ENCODE measurements at regions of chr1 and their contacts with region 1.

Region 1: GRCh38 chr1:197915862-197916499 is 1.2 kb upstream of the LHX9 start:
- DNase-seq: peak in 3 of 14 experiments; percentile 11 to 33 (median 30)
- ATAC-seq: no peak
- H3K4me3 ChIP-seq: no peak overlapping the region
- H3K4me3 Mint-ChIP-seq: peak overlapping the region; percentile 35
- H3K27ac ChIP-seq: no peak overlapping the region
- H3K27ac Mint-ChIP-seq: no peak overlapping the region
- H3K4me1 ChIP-seq: peaks cover 85% of the 10 kb centered on the region
- H3K4me1 Mint-ChIP-seq: peaks cover 94% of the 10 kb centered on the region
- H3K27me3 ChIP-seq: peaks cover 99 to 100% of the 10 kb centered on the region in 2 experiments
- H3K27me3 Mint-ChIP-seq: peaks cover 100% of the 10 kb centered on the region
- CTCF ChIP-seq: no peak

Region 2: DNA sequence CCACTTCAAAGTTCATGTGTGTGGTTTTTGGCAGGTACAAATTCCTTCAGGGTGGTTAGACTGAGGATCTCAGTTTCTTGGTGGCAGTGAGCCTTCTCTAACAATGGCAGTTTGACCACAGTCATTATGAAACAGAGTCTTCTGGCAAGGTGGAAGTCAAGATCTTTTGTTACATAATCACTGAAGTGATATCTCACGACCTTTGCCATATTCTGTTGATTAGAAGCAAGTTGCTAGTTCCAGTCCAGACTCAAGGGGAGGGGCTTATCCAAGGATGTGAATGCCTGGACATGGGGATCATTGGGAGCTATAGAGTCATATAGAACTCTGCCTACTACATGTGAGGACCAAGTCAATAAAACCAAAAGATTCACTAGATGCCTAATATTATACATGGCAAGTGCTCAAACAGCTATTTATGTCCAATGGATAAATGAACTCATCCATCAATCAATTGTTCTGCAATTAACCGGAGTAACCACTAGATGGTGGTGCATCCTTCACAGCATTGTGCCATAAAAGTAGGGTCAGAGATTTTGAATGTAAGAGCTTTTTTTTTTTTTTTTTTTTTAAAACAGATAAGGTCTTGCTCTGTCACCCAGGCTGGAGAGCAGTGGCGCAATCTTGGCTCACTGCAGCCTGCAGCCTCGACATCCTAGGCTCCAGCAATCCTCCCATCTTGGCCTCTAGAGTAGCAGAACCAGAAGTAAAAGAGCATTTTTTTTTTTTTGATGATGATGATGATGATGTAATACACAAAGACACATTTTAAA is 516.0 kb before region 1 on chr1:
- CTCF ChIA-PET with region 1: no interaction called
- POLR2A ChIA-PET with region 1: no interaction called
- intact Hi-C with region 1: loop called (anchors 10 kb)
- DNase-seq: peak in 5 of 14 experiments; percentile 7 to 67 (median 48)
- ATAC-seq: peak; percentile 81
- H3K4me3 ChIP-seq: no peak overlapping the region
- H3K4me3 Mint-ChIP-seq: no peak overlapping the region
- H3K27ac ChIP-seq: no peak overlapping the region
- H3K27ac Mint-ChIP-seq: no peak overlapping the region
- H3K4me1 ChIP-seq: no peaks in the 10 kb centered on the region
- H3K4me1 Mint-ChIP-seq: no peaks in the 10 kb centered on the region
- H3K27me3 ChIP-seq: no peaks in the 10 kb centered on the region
- H3K27me3 Mint-ChIP-seq: peaks cover 15% of the 10 kb centered on the region
- CTCF ChIP-seq: peak; percentile 59

Region 3: DNA sequence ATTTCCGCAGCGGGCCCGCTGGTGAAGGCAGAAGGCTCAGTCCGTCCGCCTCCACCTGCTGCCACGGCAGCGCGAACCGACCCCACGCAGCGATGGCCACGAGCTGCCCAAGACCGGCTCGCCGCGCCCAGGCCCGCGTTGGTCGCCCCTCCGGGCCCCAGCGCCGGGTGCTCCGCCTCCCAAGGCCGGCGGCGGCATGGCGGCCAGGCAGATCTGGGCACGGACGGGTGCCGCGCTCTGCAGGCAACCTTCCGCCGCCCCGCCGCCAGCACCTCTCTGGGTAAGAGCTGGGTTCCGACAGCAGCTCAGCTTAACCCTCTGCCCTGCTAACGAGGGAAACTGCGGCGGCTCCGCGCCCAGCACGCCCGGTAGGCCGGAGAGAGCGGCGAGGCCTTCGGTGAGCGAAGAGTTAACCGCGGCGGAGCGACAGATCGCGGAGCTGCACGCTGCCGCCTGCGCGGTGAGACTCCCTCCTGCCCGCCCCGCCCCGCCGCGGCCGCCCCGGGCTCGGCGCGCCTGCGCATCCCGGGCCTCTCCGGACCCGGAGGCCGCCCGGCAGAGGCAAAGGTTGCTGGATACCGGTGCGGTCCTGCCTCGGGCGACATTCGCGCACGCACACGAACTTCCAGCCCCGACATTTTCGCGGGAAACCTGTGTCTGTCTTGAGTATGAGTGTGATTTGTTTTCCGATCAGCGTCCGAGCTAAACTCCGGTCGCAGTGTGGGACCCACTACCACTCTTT is 13.4 kb before region 1 on chr1 and contains the start of gene C1orf53:
- CTCF ChIA-PET with region 1: interaction called, 5 read pairs
- POLR2A ChIA-PET with region 1: interaction called, 39 read pairs
- intact Hi-C with region 1: loop called in 1 of 2 experiments (anchors 2 kb)
- DNase-seq: peak; percentile 40 to 87 (median 66)
- ATAC-seq: peak; percentile 89
- H3K4me3 ChIP-seq: peak within 1 kb of the TSS; percentile 59
- H3K4me3 Mint-ChIP-seq: peak within 1 kb of the TSS; percentile 97
- H3K27ac ChIP-seq: peak within 1 kb of the TSS in 1 of 2 donors; percentile 30
- H3K27ac Mint-ChIP-seq: peak within 1 kb of the TSS; percentile 79
- H3K4me1 ChIP-seq: peaks cover 11% of the 10 kb centered on the region
- H3K4me1 Mint-ChIP-seq: peaks cover 14% of the 10 kb centered on the region
- H3K27me3 ChIP-seq: peaks cover 18 to 48% of the 10 kb centered on the region in 2 experiments
- H3K27me3 Mint-ChIP-seq: peaks cover 54% of the 10 kb centered on the region
- CTCF ChIP-seq: no peak
- total RNA-seq, gene C1orf53: not detected

Region 4: DNA sequence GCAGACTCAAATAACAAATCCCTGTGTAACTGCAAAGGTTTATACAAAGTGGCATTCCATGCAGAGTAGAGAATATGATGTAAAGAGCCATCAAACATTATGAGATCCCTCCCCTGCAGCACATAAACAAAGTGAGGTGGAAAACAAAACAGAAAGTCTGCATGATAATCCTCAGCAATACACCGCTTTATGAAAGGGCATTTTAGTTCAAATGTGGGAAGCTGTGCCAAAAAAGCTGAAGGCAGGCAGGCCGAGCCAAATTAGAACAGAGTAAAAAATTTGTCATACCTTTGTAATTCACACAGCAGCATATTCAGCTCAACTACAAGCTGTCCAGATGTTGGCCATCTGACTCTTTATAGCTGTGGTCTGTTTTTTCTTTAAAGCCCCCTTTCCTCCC is 114.7 kb after region 1 on chr1:
- CTCF ChIA-PET with region 1: no interaction called
- POLR2A ChIA-PET with region 1: no interaction called
- intact Hi-C with region 1: no loop called
- DNase-seq: no peak
- ATAC-seq: no peak
- H3K4me3 ChIP-seq: no peak overlapping the region
- H3K4me3 Mint-ChIP-seq: no peak overlapping the region
- H3K27ac ChIP-seq: no peak overlapping the region
- H3K27ac Mint-ChIP-seq: no peak overlapping the region
- H3K4me1 ChIP-seq: no peaks in the 10 kb centered on the region
- H3K4me1 Mint-ChIP-seq: no peaks in the 10 kb centered on the region
- H3K27me3 ChIP-seq: no peaks in the 10 kb centered on the region
- H3K27me3 Mint-ChIP-seq: peaks cover 13% of the 10 kb centered on the region
- CTCF ChIP-seq: no peak